B cell (primary cell): ENCODE measurements at regions of chr17 and their contacts with region 1.

Region 1: DNA sequence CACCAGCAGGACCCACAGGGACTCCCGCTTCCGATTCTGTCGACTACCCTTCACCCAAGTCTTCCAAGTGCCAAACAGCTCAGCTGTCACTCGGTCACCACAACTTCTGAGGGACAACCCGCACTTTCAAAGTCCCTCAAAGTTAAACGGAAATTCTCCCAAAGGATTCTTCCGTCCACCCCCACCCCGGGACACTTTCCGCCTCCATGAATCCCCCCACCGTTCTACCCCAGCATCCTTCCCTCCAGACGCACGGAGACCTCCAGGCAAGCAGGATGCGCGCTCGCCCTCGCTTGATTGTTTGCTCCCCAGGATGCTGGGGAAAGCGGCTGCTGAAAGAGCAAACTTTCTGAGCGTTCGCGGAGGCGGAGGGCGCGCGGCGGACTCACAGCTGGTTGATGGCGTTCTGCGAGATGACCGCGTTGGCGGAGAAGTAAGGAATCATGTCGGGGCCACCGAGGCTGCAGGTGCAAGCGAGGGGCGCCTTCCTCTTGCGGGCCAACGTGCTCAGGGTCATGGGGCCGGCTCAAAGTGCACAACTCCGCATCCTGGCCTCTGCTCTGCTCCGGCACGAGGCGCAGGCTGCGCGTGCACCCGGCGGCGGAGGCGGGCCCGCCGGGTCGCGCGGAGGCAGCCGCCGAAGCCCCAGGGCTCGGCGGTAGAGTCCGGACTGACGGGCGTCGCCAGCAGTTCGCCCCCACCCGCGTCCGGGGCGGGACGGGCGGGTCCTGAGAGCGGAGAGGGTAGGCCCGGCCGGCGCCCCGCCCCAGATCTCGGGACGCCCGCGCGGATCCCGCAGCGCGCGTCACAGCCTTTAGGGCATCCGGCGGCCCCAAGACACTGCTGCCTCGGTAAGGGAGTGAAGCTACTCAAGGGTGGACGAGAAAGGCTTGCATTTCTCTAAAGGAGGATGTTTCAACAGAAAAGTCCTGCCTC is 138.3 kb upstream of the CORO6 start:
- DNase-seq: peak; percentile 97
- ATAC-seq: peak; percentile 87
- H3K4me3 ChIP-seq: peak overlapping the region; percentile 83 to 96 (median 94)
- H3K4me3 Mint-ChIP-seq: peak overlapping the region; percentile 90
- H3K27ac ChIP-seq: peak overlapping the region; percentile 80 to 83
- H3K27ac Mint-ChIP-seq: peak overlapping the region; percentile 90
- H3K4me1 ChIP-seq: peaks cover 34 to 41% of the 10 kb centered on the region in 2 donors
- H3K4me1 Mint-ChIP-seq: peaks cover 38% of the 10 kb centered on the region
- H3K27me3 ChIP-seq: no peaks in the 10 kb centered on the region
- H3K27me3 Mint-ChIP-seq: no peaks in the 10 kb centered on the region
- CTCF ChIP-seq: no peak

Region 2: GRCh38 chr17:29495011-29495410 is 266.0 kb before region 1 on chr17:
- CTCF ChIA-PET with region 1: no interaction called
- POLR2A ChIA-PET with region 1: interaction called, 11 read pairs
- intact Hi-C with region 1: no loop called
- DNase-seq: no peak
- ATAC-seq: no peak
- H3K4me3 ChIP-seq: no peak overlapping the region
- H3K4me3 Mint-ChIP-seq: no peak overlapping the region
- H3K27ac ChIP-seq: no peak overlapping the region
- H3K27ac Mint-ChIP-seq: no peak overlapping the region
- H3K4me1 ChIP-seq: no peaks in the 10 kb centered on the region
- H3K4me1 Mint-ChIP-seq: no peaks in the 10 kb centered on the region
- H3K27me3 ChIP-seq: no peaks in the 10 kb centered on the region
- H3K27me3 Mint-ChIP-seq: no peaks in the 10 kb centered on the region
- CTCF ChIP-seq: no peak

Region 3: DNA sequence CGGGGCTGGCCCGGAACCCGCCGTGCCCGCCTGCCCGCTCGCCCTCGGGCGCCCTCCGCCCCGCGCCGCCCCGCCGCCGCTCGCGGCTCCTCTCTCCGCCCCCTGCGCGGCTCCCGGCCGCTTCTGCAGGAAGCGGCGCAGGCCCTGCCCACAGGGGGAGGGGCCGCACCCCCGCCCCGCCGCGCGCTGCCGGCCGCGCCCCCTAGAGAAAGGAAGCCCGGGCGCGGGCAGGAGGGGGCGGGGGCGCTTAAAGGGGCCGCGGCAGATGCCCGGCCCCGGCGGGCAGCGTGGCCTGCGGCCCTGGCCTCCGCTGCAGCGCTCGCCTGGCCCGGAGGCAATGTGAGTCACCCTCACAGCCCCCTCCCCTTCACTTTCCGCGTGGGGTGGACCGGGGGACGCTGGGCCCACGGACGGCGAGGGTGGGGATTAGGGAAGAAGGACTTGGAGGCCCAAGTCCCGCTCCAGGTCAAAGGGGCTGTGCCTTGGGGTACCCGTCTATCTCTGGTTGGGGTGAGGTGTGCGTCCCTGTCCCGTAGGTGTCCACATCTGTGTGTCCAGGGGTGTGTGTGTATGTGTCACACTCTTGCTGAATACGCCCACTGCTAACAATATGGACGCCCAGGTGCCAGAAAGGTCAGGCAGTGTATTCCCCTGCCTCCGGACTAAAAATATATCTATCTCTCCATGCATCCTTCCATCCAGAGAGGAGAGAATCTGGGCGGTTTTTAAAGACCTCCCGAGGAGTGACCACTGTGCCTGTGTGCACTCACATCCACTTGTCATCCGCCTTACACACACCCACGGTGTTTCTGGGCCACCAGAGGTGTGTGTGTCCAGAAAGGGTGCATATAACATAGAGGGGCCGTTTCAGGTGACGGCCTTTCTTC is 171.3 kb before region 1 on chr17 and contains the start of gene GIT1:
- CTCF ChIA-PET with region 1: interaction called, 4 read pairs
- POLR2A ChIA-PET with region 1: interaction called, 3 read pairs
- intact Hi-C with region 1: loop called (anchors 5 kb)
- DNase-seq: peak; percentile 90
- ATAC-seq: peak; percentile 82
- H3K4me3 ChIP-seq: peak within 1 kb of the TSS; percentile 58 to 96 (median 69)
- H3K4me3 Mint-ChIP-seq: peak within 1 kb of the TSS; percentile 91
- H3K27ac ChIP-seq: peak within 1 kb of the TSS; percentile 46 to 51
- H3K27ac Mint-ChIP-seq: peak within 1 kb of the TSS; percentile 94
- H3K4me1 ChIP-seq: peaks cover 62 to 75% of the 10 kb centered on the region in 2 donors
- H3K4me1 Mint-ChIP-seq: peaks cover 69% of the 10 kb centered on the region
- H3K27me3 ChIP-seq: peaks cover 0 to 7% (median 2%) of the 10 kb centered on the region in 4 experiments
- H3K27me3 Mint-ChIP-seq: no peaks in the 10 kb centered on the region
- CTCF ChIP-seq: no peak
- total RNA-seq, gene GIT1: 61.9 and 66.3 TPM in 2 replicates

Region 4: DNA sequence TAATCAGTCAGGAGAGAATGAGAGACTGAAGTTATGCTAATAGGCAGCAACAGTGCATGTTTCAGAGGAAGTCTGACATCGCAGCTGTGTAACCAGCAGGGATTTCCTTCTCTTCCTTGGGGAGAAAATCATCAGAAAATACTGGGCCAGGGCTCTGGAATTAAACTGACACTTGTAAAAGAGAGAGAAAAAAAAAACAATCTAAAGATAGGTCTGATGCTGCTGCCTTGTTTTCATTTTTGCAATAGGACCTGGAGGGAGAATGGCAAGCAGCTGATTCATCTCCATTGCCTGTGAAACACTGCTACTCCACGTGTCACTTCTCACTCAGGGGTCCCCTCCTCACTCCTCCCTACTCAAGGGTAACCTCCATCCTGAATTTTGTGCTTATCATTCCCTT is 120.6 kb before region 1 on chr17:
- CTCF ChIA-PET with region 1: interaction called, 11 read pairs
- POLR2A ChIA-PET with region 1: interaction called, 5 read pairs
- intact Hi-C with region 1: loop called (anchors 5 kb)
- DNase-seq: no peak
- ATAC-seq: no peak
- H3K4me3 ChIP-seq: no peak overlapping the region
- H3K4me3 Mint-ChIP-seq: no peak overlapping the region
- H3K27ac ChIP-seq: peak overlapping the region in 1 of 2 donors; percentile 64
- H3K27ac Mint-ChIP-seq: peak overlapping the region; percentile 65
- H3K4me1 ChIP-seq: peaks cover 15 to 19% of the 10 kb centered on the region in 2 donors
- H3K4me1 Mint-ChIP-seq: peaks cover 32% of the 10 kb centered on the region
- H3K27me3 ChIP-seq: no peaks in the 10 kb centered on the region
- H3K27me3 Mint-ChIP-seq: no peaks in the 10 kb centered on the region
- CTCF ChIP-seq: no peak

Region 5: DNA sequence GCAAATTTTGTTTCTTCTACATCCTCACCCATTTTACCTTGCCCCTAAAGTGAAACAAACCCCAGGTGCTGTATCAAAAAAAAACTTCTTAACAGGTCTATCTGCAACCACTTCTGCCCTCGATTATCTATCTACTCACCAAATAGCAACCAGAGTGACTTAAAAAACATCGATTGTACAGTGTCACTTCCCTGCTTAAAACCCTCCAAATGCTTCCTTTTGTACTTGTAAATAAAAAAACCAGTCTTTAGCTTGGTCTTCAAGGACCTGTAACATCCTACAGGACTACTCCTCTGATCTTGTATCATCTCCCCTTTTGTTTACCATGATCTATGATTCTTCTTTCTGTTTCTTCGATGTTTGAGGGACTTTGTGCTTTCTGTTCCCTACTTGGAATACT is 55.6 kb before region 1 on chr17:
- CTCF ChIA-PET with region 1: interaction called, 12 read pairs
- POLR2A ChIA-PET with region 1: interaction called, 7 read pairs
- intact Hi-C with region 1: loop called (anchors 1 kb)
- DNase-seq: peak; percentile 48
- ATAC-seq: no peak
- H3K4me3 ChIP-seq: peak overlapping the region in 3 of 5 experiments; percentile 11 to 15 (median 11)
- H3K4me3 Mint-ChIP-seq: peak overlapping the region; percentile 59
- H3K27ac ChIP-seq: peak overlapping the region; percentile 94 to 97
- H3K27ac Mint-ChIP-seq: peak overlapping the region; percentile 90
- H3K4me1 ChIP-seq: peaks cover 49 to 62% of the 10 kb centered on the region in 2 donors
- H3K4me1 Mint-ChIP-seq: peaks cover 56% of the 10 kb centered on the region
- H3K27me3 ChIP-seq: no peaks in the 10 kb centered on the region
- H3K27me3 Mint-ChIP-seq: no peaks in the 10 kb centered on the region
- CTCF ChIP-seq: no peak

Region 6: GRCh38 chr17:29747660-29748059 is 13.4 kb before region 1 on chr17:
- CTCF ChIA-PET with region 1: interaction called, 6 read pairs
- POLR2A ChIA-PET with region 1: interaction called, 3 read pairs
- intact Hi-C with region 1: loop called (anchors 2 kb)
- DNase-seq: no peak
- ATAC-seq: no peak
- H3K4me3 ChIP-seq: no peak overlapping the region
- H3K4me3 Mint-ChIP-seq: peak overlapping the region; percentile 30
- H3K27ac ChIP-seq: peak overlapping the region in 1 of 2 donors; percentile 73
- H3K27ac Mint-ChIP-seq: peak overlapping the region; percentile 59
- H3K4me1 ChIP-seq: peaks cover 46 to 53% of the 10 kb centered on the region in 2 donors
- H3K4me1 Mint-ChIP-seq: peaks cover 67% of the 10 kb centered on the region
- H3K27me3 ChIP-seq: no peaks in the 10 kb centered on the region
- H3K27me3 Mint-ChIP-seq: no peaks in the 10 kb centered on the region
- CTCF ChIP-seq: no peak

Region 7: GRCh38 chr17:29789196-29790170 is 28.5 kb after region 1 on chr17:
- CTCF ChIA-PET with region 1: no interaction called
- POLR2A ChIA-PET with region 1: no interaction called
- intact Hi-C with region 1: no loop called
- DNase-seq: no peak
- ATAC-seq: no peak
- H3K4me3 ChIP-seq: no peak overlapping the region
- H3K4me3 Mint-ChIP-seq: no peak overlapping the region
- H3K27ac ChIP-seq: no peak overlapping the region
- H3K27ac Mint-ChIP-seq: no peak overlapping the region
- H3K4me1 ChIP-seq: peaks cover 3 to 8% of the 10 kb centered on the region in 2 donors
- H3K4me1 Mint-ChIP-seq: peaks cover 9% of the 10 kb centered on the region
- H3K27me3 ChIP-seq: no peaks in the 10 kb centered on the region
- H3K27me3 Mint-ChIP-seq: no peaks in the 10 kb centered on the region
- CTCF ChIP-seq: no peak